PC-3 (cell line): ENCODE measurements at regions of chr12 and their contacts with region 1.

Region 1: GRCh38 chr12:27142101-27142721 is 59.8 kb upstream of the C12orf71 start:
- DNase-seq: peak; percentile 96
- ATAC-seq: peak; percentile 98
- H3K4me3 ChIP-seq: no peak overlapping the region
- H3K27ac ChIP-seq: no peak overlapping the region
- H3K4me1 ChIP-seq: no peaks in the 10 kb centered on the region
- H3K27me3 ChIP-seq: no peaks in the 10 kb centered on the region
- CTCF ChIP-seq: peak; percentile 99

Region 2: DNA sequence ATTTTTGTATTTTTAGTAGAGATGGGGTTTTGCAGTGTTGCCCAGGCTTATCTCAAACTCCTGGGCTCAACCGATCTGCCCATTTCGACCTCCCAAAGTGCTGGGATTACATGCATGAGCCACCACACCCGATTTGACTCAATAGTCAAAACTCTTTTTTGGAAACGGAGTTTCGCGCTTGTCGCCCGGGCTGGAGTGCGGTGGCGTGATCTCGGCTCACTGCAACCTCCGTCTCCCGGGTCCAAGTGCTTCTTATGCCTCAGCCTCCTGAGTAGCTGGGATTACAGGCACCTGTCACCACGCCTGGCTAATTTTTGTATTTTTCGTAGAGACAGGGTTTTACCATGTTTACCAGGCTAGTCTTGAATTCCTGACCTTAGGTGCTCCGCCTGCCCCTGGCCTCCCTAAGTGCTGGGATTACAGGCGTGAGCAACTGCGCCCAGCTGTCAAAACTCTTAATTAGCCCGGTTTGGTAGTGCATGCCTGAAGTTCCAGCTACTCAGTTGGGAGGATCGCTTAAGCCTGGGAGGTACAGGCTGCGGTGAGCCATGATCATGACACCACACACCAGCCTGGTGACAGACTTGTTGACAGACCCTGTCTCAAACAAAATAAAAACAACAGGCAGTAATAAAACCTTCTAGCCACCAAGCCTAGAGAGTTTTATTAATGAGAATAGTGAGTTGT is 107.5 kb before region 1 on chr12:
- CTCF ChIA-PET with region 1: no interaction called
- POLR2A ChIA-PET with region 1: no interaction called
- intact Hi-C with region 1: loop called (anchors 1 kb)
- DNase-seq: no peak
- ATAC-seq: no peak
- H3K4me3 ChIP-seq: no peak overlapping the region
- H3K27ac ChIP-seq: no peak overlapping the region
- H3K4me1 ChIP-seq: no peaks in the 10 kb centered on the region
- H3K27me3 ChIP-seq: no peaks in the 10 kb centered on the region
- CTCF ChIP-seq: no peak

Region 3: GRCh38 chr12:27179400-27180214 is 37.4 kb after region 1 on chr12:
- CTCF ChIA-PET with region 1: no interaction called
- POLR2A ChIA-PET with region 1: no interaction called
- intact Hi-C with region 1: loop called (anchors 2 kb)
- DNase-seq: peak; percentile 100
- ATAC-seq: peak; percentile 86
- H3K4me3 ChIP-seq: peak overlapping the region; percentile 7; the same call in 1 of the 2 replicates
- H3K27ac ChIP-seq: peak overlapping the region; percentile 73
- H3K4me1 ChIP-seq: peaks cover 61% of the 10 kb centered on the region
- H3K27me3 ChIP-seq: no peaks in the 10 kb centered on the region
- CTCF ChIP-seq: no peak

Region 4: DNA sequence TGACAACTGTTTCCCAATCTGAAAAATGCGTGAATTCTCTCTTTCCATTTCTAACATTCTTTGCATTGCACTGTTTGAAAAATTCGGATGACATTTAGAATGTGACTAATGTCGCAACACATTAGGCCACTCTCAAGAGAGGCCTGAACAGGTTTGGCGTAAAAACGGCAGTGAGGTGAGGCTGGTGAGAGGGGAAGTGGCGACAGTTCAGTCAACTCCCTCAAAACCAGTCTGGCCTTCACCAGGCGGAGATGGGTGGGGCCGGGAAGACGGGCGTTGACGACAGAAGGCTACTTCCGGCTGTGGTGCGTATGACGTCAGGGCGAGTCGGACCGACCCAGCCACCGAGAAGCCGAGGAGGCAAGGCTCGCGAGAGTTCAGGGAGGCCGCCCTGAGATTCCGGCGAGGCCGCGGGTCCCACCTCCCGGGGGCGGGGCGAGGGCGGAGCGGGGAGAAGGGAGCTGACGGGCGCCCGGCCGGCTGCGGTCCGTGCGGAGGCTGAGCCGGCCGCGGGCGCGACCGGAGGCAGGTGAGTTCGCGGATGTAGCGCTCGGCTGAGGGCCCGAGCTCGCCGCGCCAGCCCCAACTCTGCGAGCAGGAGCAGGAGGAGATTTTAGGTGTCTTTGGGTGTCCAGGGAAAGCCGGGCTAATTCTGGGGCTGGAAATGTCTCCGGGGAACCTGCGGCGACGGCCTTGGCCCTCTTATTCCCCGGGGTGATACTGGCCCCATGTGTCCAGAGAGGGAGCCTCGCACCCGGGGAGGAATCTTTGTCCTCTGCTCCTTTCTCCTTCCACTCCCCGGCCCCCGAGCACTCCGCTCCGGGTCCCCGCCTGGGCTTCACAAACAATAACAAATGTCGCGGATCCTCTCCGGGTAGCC is 101.8 kb after region 1 on chr12 and contains the start of gene STK38L:
- CTCF ChIA-PET with region 1: interaction called, 3 read pairs
- POLR2A ChIA-PET with region 1: no interaction called
- intact Hi-C with region 1: loop called (anchors 1 kb)
- DNase-seq: peak; percentile 98
- ATAC-seq: peak; percentile 94
- H3K4me3 ChIP-seq: peak within 1 kb of the TSS; percentile 80
- H3K27ac ChIP-seq: peak within 1 kb of the TSS; percentile 40
- H3K4me1 ChIP-seq: peaks cover 28% of the 10 kb centered on the region
- H3K27me3 ChIP-seq: no peaks in the 10 kb centered on the region
- CTCF ChIP-seq: peak; percentile 51; the same call in 1 of the 2 replicates
- total RNA-seq, gene STK38L: 19.4 and 32.3 TPM in 2 replicates